ENCODE measurements at regions of chrX and their contacts with region 1.

Region 1: DNA sequence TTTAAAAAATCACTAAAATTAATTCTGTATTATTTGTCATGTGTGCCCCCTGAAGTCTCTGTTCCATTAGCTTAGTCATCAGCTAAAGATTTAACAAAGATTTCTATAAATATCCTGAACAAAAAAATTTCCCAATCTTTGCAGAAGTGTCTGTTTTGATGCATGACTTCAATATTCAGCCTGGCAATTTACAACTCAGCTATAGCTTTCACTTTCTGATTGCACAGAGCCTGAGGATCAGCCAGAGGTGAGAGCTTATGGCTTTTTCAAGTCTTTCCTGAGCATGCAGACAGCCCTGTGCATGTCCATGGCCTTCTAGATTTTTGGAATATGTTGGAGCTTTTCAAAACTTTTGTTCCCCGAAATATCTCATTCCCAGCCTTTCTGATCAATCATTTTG is 420.1 kb downstream of the ZNF674 start:
- DNase-seq: no peak
- ATAC-seq: no peak
- H3K4me3 ChIP-seq: no peak overlapping the region
- H3K27ac ChIP-seq: no peak overlapping the region
- H3K4me1 ChIP-seq: no peaks in the 10 kb centered on the region
- H3K27me3 ChIP-seq: no peaks in the 10 kb centered on the region
- CTCF ChIP-seq: no peak
- POLR2A ChIP-seq: no peak

Region 2: GRCh38 chrX:46029777-46030176 is 95.3 kb before region 1 on chrX:
- in situ Hi-C with region 1: loop called in 1 of 4 experiments (anchors 25 kb)
- intact Hi-C with region 1: no loop called
- DNase-seq: no peak
- ATAC-seq: no peak
- H3K4me3 ChIP-seq: no peak overlapping the region
- H3K27ac ChIP-seq: no peak overlapping the region
- H3K4me1 ChIP-seq: no peaks in the 10 kb centered on the region
- H3K27me3 ChIP-seq: peaks cover 0 to 4% (median 0%) of the 10 kb centered on the region in 3 donors
- CTCF ChIP-seq: no peak
- POLR2A ChIP-seq: no peak

Region 3: DNA sequence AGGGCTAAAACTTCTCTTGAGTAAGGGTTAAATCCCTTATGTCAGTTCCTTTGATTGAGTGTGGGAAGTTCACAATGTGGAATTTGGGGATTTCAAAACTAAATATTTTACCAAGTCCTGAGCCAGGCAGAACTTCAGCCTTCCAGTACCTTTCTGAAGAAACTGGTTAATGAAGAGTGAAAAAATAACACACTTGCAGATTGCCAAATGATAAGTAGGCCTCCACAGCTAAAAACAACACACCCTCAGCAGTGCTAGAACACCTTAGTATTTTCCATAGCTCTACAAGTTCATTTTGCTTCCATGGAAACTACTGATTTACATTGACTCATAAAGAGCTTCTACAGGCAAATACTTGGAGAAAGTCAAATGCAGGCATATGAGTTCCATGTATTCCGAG is 93.3 kb after region 1 on chrX:
- in situ Hi-C with region 1: no loop called
- intact Hi-C with region 1: no loop called
- DNase-seq: no peak
- ATAC-seq: no peak
- H3K4me3 ChIP-seq: no peak overlapping the region
- H3K27ac ChIP-seq: no peak overlapping the region
- H3K4me1 ChIP-seq: no peaks in the 10 kb centered on the region
- H3K27me3 ChIP-seq: peaks cover 0 to 3% (median 0%) of the 10 kb centered on the region in 3 donors
- CTCF ChIP-seq: no peak
- POLR2A ChIP-seq: no peak